Aorta (tissue), 5 donors: ENCODE measurements at regions of chr17 and their contacts with region 1.

Region 1: DNA sequence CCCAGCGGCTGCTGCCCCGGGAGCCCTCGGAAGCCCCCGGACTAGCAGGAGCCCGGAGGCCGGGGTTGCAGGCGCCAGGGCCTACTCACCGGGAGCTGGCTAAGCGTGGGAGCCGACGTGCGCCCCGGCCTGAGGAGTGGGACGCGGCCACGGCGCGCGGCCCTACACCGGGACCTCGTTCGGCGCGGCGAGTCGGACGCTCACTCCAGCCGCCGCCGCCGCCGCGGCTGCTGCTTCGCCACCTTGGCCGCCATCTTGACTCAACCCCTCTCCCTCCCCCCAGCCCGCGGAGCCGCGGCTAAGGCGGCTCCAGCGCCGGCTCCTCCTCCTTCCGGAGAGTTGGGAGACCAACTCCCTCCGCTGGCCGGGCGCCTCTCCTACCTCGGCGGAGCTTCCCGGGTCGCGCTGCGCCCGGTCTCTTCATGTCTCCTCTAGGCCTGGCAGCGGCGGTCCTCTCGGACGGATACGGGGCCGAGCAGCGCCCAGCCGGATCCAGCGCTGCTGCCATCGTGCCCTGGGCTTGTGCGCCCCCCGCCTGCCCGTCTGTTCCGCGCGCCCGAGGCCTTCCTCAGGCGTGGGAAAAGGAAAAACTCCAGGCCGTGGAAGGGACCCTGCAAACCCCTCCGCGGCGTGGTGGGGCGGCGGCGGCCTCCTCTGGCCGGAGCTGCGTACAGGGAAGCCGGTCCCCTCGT is at the start of gene NCOR1:
- DNase-seq: peak; percentile 96 to 97
- ATAC-seq: peak; percentile 97
- H3K4me3 ChIP-seq: peak within 1 kb of the TSS; percentile 71 to 83
- H3K27ac ChIP-seq: peak within 1 kb of the TSS; percentile 50 to 82
- H3K4me1 ChIP-seq: peaks cover 0 to 5% of the 10 kb centered on the region in 2 donors
- H3K27me3 ChIP-seq: no peaks in the 10 kb centered on the region
- total RNA-seq, gene NCOR1: 134 to 144 TPM

Region 2: GRCh38 chr17:16255481-16255921 is 40.1 kb after region 1 on chr17:
- intact Hi-C with region 1: no loop called
- DNase-seq: peak; percentile 80 to 82
- ATAC-seq: peak; percentile 84
- H3K4me3 ChIP-seq: no peak overlapping the region
- H3K27ac ChIP-seq: peak overlapping the region; percentile 56 to 73
- H3K4me1 ChIP-seq: no peaks in the 10 kb centered on the region
- H3K27me3 ChIP-seq: no peaks in the 10 kb centered on the region

Region 3: DNA sequence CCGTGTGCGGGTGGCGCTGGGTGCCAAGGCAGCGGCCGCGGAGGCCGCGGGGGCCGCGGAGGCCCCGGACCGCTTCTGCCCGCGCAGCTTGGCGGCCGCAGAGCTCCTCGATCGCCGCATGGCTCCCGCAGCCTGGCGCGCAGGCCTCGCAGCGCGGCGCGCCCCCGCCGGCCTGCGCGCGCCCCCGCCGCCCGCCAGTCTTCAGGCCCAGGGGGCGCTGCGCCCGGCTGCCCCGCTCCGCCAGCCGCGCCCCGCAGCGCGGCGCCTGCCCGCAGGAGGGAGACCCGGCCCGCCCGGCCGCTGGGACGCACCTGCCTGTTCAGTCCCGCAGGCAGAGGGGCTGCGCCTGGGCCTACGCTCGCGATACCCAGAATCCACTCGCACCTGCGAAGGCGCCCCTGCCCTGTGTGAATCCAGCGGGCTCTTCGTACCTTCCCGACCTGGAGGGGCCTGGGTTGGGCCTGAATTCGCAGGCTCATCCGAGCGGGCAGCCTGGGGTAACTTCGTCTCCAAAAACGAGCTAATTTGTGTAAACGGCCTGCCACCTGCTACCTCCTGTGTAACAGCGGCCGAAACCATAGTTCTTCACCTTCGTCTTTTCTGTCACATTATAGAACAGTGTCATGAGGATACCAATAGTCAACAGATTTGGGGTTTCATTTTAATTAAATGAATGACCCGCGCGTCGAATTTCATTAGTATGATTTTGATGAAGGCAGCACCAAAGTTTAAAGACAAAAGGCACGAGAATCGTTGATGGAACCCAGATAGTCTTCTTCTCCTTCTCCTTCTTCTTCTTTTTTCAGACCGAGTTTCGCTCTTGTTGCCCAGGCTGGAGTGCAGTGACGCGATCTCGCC is 138.1 kb after region 1 on chr17 and contains the start of gene CENPV:
- intact Hi-C with region 1: loop called (anchors 5 to 10 kb)
- DNase-seq: peak; percentile 50 to 81
- ATAC-seq: peak; percentile 52
- H3K4me3 ChIP-seq: peak within 1 kb of the TSS; percentile 61 to 88
- H3K27ac ChIP-seq: no peak within 1 kb of the TSS
- H3K4me1 ChIP-seq: peaks cover 0 to 4% of the 10 kb centered on the region in 2 donors
- H3K27me3 ChIP-seq: no peaks in the 10 kb centered on the region
- total RNA-seq, gene CENPV: 9.5 to 24.8 TPM